B cell (primary cell): ENCODE measurements at regions of chr11 and their contacts with region 1.

Region 1: DNA sequence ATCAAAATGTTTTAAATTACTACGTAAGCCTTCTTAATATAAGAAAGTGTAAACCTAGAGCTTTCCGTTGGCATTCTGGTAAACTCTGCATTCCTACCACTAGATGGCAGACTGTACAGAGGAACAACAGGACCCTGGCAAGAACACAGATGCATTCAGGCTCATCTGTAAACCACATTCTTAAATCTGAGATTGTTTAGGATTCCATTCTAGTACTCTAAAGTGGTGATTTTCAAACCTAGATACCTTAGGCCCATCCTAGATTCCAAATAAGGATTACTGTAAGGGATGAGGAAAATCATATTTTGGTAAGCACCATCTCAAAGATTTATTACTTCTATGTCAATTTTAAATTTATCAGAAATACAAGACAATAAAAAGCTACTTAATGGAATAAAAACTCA is 26.9 kb downstream of the PICALM start:
- DNase-seq: peak; percentile 83
- ATAC-seq: peak; percentile 91
- H3K4me3 ChIP-seq: no peak overlapping the region
- H3K4me3 Mint-ChIP-seq: peak overlapping the region; percentile 1
- H3K27ac ChIP-seq: peak overlapping the region in 1 of 2 donors; percentile 48
- H3K27ac Mint-ChIP-seq: peak overlapping the region; percentile 2
- H3K4me1 ChIP-seq: peaks cover 25 to 52% of the 10 kb centered on the region in 2 donors
- H3K4me1 Mint-ChIP-seq: peaks cover 63% of the 10 kb centered on the region
- H3K27me3 ChIP-seq: no peaks in the 10 kb centered on the region
- H3K27me3 Mint-ChIP-seq: no peaks in the 10 kb centered on the region
- CTCF ChIP-seq: peak; percentile 89

Region 2: GRCh38 chr11:85805387-85805786 is 236.6 kb before region 1 on chr11:
- CTCF ChIA-PET with region 1: no interaction called
- POLR2A ChIA-PET with region 1: no interaction called
- intact Hi-C with region 1: no loop called
- DNase-seq: no peak
- ATAC-seq: no peak
- H3K4me3 ChIP-seq: no peak overlapping the region
- H3K4me3 Mint-ChIP-seq: no peak overlapping the region
- H3K27ac ChIP-seq: no peak overlapping the region
- H3K27ac Mint-ChIP-seq: no peak overlapping the region
- H3K4me1 ChIP-seq: peaks cover 8 to 14% of the 10 kb centered on the region in 2 donors
- H3K4me1 Mint-ChIP-seq: peaks cover 16% of the 10 kb centered on the region
- H3K27me3 ChIP-seq: peaks cover 0 to 7% (median 0%) of the 10 kb centered on the region in 4 experiments
- H3K27me3 Mint-ChIP-seq: peaks cover 10% of the 10 kb centered on the region
- CTCF ChIP-seq: no peak

Region 3: GRCh38 chr11:85854557-85855340 is 187.2 kb before region 1 on chr11:
- CTCF ChIA-PET with region 1: interaction called, 12 read pairs
- POLR2A ChIA-PET with region 1: no interaction called
- intact Hi-C with region 1: no loop called
- DNase-seq: peak; percentile 92
- ATAC-seq: peak; percentile 96
- H3K4me3 ChIP-seq: peak overlapping the region; percentile 51 to 74 (median 69)
- H3K4me3 Mint-ChIP-seq: peak overlapping the region; percentile 89
- H3K27ac ChIP-seq: peak overlapping the region; percentile 20 to 77
- H3K27ac Mint-ChIP-seq: peak overlapping the region; percentile 84
- H3K4me1 ChIP-seq: peaks cover 3 to 11% of the 10 kb centered on the region in 2 donors
- H3K4me1 Mint-ChIP-seq: peaks cover 12% of the 10 kb centered on the region
- H3K27me3 ChIP-seq: no peaks in the 10 kb centered on the region
- H3K27me3 Mint-ChIP-seq: peaks cover 11% of the 10 kb centered on the region
- CTCF ChIP-seq: peak; percentile 92

Region 4: DNA sequence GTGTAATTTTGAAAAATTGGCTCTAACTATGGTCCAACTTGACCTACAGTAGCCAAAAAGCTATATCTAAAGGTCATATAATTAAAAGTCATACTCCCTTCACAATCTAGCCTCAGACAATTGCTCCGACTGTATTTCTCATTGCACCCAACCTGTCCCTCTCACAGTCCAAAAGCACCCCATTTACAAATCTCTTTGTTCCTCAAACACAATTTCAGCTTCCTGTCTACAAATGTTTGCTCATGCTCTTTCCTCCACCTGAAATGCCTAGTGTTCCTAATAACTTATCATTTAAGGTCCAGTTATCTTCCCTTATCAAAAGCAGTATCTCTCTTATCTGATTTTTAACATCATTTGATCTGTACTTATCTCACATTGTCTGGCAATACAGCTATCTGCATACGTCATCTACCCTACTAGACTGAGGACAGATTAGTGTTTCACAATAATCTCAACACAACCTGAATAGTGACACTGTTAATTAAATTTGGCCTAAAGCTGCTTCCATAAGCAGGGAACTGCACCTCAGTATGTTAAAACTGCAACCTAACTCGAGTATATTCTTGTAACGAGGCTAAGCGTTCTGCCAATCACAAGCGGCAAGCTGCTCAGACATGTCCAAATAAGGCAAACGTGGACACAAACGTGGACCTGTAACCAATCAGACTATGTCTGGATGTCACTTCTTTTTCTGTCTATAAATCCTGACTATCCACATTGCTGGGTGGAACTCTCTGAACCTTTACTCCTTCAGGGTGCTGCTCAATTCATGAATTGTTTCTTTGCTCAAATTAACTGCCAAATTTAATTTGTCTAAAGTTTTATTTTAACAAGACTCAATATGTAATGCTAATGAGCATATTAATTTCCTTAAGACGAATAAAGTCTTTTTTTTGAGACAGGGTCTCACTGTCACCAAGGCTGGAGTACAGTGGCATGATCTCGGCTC is 11.0 kb after region 1 on chr11:
- CTCF ChIA-PET with region 1: interaction called, 12 read pairs
- POLR2A ChIA-PET with region 1: no interaction called
- intact Hi-C with region 1: loop called (anchors 2 kb)
- DNase-seq: no peak
- ATAC-seq: no peak
- H3K4me3 ChIP-seq: no peak overlapping the region
- H3K4me3 Mint-ChIP-seq: peak overlapping the region; percentile 3
- H3K27ac ChIP-seq: peak overlapping the region in 1 of 2 donors; percentile 10
- H3K27ac Mint-ChIP-seq: no peak overlapping the region
- H3K4me1 ChIP-seq: peaks cover 41 to 42% of the 10 kb centered on the region in 2 donors
- H3K4me1 Mint-ChIP-seq: peaks cover 72% of the 10 kb centered on the region
- H3K27me3 ChIP-seq: no peaks in the 10 kb centered on the region
- H3K27me3 Mint-ChIP-seq: no peaks in the 10 kb centered on the region
- CTCF ChIP-seq: no peak

Region 5: DNA sequence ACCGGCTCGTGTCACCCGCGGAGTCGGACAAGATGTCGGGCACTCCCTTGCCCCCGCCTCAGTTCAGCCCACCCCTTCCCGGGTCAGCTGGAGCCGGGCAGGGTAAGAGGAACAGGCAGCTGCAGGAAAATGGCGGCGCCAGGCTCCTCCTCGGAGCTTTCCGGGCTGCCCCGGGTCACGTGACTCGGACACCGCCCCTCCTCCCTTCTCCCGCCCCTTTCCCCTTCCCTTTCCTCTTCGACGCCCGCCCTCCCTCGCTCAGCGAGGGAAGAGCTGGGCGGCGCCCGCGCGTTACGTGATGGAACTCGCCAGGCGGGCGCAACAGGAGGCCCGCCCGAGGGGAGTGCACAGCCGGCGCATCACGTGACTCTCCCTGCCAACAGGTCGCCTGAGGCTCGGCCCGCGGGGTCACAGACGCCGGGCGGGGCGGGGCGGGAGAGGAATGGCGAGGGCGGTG is 27.0 kb after region 1 on chr11 and contains the start of gene PICALM:
- CTCF ChIA-PET with region 1: interaction called, 49 read pairs
- POLR2A ChIA-PET with region 1: no interaction called
- intact Hi-C with region 1: loop called (anchors 1 kb)
- DNase-seq: peak; percentile 98
- ATAC-seq: peak; percentile 82
- H3K4me3 ChIP-seq: peak within 1 kb of the TSS; percentile 76 to 93 (median 86)
- H3K4me3 Mint-ChIP-seq: peak within 1 kb of the TSS; percentile 100
- H3K27ac ChIP-seq: peak within 1 kb of the TSS; percentile 88 to 95
- H3K27ac Mint-ChIP-seq: peak within 1 kb of the TSS; percentile 99
- H3K4me1 ChIP-seq: peaks cover 31% of the 10 kb centered on the region in 2 donors
- H3K4me1 Mint-ChIP-seq: peaks cover 42% of the 10 kb centered on the region
- H3K27me3 ChIP-seq: no peaks in the 10 kb centered on the region
- H3K27me3 Mint-ChIP-seq: no peaks in the 10 kb centered on the region
- CTCF ChIP-seq: no peak
- total RNA-seq, gene PICALM: 165 and 178 TPM in 2 replicates

Region 6: DNA sequence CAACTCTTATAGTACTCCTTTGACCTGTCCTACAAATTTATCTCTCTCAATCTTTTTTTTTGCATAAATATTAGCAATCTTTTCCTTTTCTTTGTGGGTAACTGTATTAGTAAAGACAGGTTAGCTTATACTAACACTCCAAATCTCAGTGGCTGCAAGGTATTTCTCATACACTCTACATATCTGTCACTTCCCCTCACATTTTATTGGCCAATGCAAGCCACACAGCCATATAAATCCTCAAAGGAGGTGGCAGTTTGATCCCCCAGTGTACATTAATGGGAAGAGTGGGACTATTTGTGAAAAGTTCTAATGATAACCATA is 160.0 kb after region 1 on chr11:
- CTCF ChIA-PET with region 1: interaction called, 19 read pairs
- POLR2A ChIA-PET with region 1: interaction called, 7 read pairs
- intact Hi-C with region 1: no loop called
- DNase-seq: no peak
- ATAC-seq: peak; percentile 46
- H3K4me3 ChIP-seq: peak overlapping the region; percentile 44 to 88 (median 61)
- H3K4me3 Mint-ChIP-seq: no peak overlapping the region
- H3K27ac ChIP-seq: peak overlapping the region; percentile 59 to 68
- H3K27ac Mint-ChIP-seq: no peak overlapping the region
- H3K4me1 ChIP-seq: peaks cover 22 to 32% of the 10 kb centered on the region in 2 donors
- H3K4me1 Mint-ChIP-seq: peaks cover 8% of the 10 kb centered on the region
- H3K27me3 ChIP-seq: no peaks in the 10 kb centered on the region
- H3K27me3 Mint-ChIP-seq: no peaks in the 10 kb centered on the region
- CTCF ChIP-seq: no peak

Region 7: GRCh38 chr11:86244522-86245368 is 202.8 kb after region 1 on chr11 and contains the start of gene EED:
- CTCF ChIA-PET with region 1: interaction called, 17 read pairs
- POLR2A ChIA-PET with region 1: no interaction called
- intact Hi-C with region 1: loop called (anchors 2 kb)
- DNase-seq: peak; percentile 97
- ATAC-seq: peak; percentile 87
- H3K4me3 ChIP-seq: peak within 1 kb of the TSS; percentile 98 to 100 (median 100)
- H3K4me3 Mint-ChIP-seq: no peak within 1 kb of the TSS
- H3K27ac ChIP-seq: peak within 1 kb of the TSS; percentile 98 to 99
- H3K27ac Mint-ChIP-seq: no peak within 1 kb of the TSS
- H3K4me1 ChIP-seq: peaks cover 27 to 34% of the 10 kb centered on the region in 2 donors
- H3K4me1 Mint-ChIP-seq: peaks cover 23% of the 10 kb centered on the region
- H3K27me3 ChIP-seq: no peaks in the 10 kb centered on the region
- H3K27me3 Mint-ChIP-seq: no peaks in the 10 kb centered on the region
- CTCF ChIP-seq: no peak
- total RNA-seq, gene EED: 49.5 and 58.3 TPM in 2 replicates

Region 8: DNA sequence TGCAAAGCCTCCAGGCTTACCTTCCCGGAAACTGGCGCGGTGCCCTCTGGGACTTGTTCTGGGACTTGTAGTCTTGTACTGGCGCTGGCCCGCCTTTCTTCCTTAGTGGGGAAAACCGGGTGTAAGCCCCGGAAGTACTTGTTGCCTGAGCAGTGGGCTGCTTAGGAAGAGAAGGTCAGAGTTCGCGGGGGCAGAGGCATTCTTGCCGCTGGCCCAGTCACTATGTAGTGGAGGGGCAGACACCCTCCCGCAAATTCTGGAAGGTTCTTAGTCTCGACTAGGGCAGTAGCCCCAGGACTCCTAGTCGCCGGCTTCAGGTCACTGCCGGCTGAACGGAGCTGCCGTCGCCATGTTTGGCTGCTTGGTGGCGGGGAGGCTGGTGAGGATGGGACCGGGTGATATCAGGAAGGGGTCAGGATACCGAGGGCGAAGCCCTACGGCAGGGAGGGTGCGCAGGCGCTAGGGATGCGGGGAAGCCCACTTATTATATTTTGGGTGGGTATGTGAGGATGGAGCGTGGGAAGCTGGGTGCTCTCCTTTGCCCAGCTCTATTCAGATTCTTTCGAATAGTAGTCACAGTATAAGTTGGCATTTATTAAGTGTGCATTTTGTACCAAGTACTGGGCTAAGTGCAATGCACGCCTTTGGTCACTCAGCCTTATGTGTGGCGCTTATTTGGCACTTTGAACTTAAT is 260.3 kb after region 1 on chr11 and contains the start of gene HIKESHI:
- CTCF ChIA-PET with region 1: interaction called, 13 read pairs
- POLR2A ChIA-PET with region 1: no interaction called
- intact Hi-C with region 1: no loop called
- DNase-seq: peak; percentile 90
- ATAC-seq: peak; percentile 99
- H3K4me3 ChIP-seq: peak within 1 kb of the TSS; percentile 70 to 96 (median 92)
- H3K4me3 Mint-ChIP-seq: peak within 1 kb of the TSS; percentile 98
- H3K27ac ChIP-seq: peak within 1 kb of the TSS; percentile 70 to 95
- H3K27ac Mint-ChIP-seq: peak within 1 kb of the TSS; percentile 95
- H3K4me1 ChIP-seq: peaks cover 10 to 13% of the 10 kb centered on the region in 2 donors
- H3K4me1 Mint-ChIP-seq: peaks cover 20% of the 10 kb centered on the region
- H3K27me3 ChIP-seq: no peaks in the 10 kb centered on the region
- H3K27me3 Mint-ChIP-seq: no peaks in the 10 kb centered on the region
- CTCF ChIP-seq: no peak
- total RNA-seq, gene HIKESHI: 23.3 and 24.4 TPM in 2 replicates

Region 9: DNA sequence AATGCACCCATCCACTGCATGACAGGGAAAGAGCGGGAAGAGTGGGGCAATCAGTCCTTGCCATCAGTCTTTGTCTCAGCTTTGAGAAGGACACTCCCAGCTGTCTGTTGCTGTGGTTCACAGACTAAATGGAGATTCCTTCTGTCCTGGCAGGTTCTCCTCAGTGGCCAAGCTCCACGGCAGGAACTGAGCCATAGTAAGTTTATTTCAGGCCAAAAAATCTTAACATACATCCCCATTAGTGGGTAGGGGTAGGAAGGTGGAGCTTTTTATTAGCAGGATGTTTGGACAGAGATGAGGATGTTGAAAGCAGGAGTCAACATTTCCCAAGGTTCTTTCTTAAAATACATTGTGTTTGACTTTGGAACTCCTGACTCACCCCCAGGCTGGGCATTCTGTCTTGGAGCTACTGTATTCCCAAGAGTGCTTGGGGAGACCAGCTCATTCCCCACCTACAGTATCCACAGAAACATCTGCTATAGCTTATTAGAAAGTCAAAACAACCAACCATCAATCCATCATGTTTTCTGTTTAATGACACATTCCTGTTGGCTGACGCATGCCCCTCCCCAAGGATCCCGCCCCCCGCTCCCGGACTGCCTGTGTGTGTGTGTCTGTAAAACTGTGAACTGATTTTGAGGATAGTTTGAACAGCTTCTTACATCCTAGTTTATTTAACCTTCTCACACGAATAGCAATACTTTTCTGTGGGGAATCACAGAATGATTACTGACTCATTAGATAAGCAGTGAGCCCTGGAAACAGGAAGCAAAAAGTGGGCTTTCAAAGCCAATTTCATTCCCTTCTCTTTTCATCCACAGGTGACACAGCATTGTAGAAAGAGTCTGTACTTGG is 442.2 kb after region 1 on chr11:
- CTCF ChIA-PET with region 1: no interaction called
- POLR2A ChIA-PET with region 1: no interaction called
- intact Hi-C with region 1: no loop called
- DNase-seq: no peak
- ATAC-seq: no peak
- H3K4me3 ChIP-seq: no peak overlapping the region
- H3K4me3 Mint-ChIP-seq: no peak overlapping the region
- H3K27ac ChIP-seq: no peak overlapping the region
- H3K27ac Mint-ChIP-seq: no peak overlapping the region
- H3K4me1 ChIP-seq: no peaks in the 10 kb centered on the region
- H3K4me1 Mint-ChIP-seq: no peaks in the 10 kb centered on the region
- H3K27me3 ChIP-seq: no peaks in the 10 kb centered on the region
- H3K27me3 Mint-ChIP-seq: no peaks in the 10 kb centered on the region
- CTCF ChIP-seq: no peak